Vagina (tissue), 2 donors: ENCODE measurements at regions of chr18 and their contacts with region 1.

Region 1: DNA sequence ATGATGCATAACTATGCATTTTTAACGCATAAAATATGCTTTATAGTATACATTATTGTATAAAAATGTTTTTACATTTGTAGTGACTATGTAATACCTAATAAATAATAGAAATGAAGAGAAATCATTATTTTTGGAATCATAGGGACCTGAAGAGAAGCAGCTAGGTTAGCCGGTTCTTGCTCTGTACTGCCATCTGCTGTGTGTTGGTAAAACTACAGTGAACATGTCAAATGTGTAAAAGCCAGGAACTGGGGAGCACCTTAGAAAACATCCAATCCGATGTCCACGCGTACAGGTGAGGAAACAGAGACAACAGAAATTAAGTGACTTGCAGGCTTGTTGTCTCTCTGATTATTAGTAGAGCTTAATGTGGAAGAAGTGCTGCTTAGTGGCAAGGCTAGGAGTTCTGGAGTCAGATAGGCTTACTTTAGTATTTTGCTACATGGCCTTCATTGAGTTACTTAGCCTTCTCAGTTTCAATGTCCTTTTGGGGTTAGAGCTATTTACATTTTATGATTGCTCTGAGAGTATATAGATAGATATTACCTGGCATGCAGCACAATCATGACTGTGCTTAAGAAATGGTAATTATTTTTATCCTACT is 386.5 kb downstream of the DLGAP1 start:
- DNase-seq: no peak
- H3K4me3 ChIP-seq: no peak overlapping the region
- H3K27ac ChIP-seq: no peak overlapping the region
- H3K4me1 ChIP-seq: no peaks in the 10 kb centered on the region
- H3K27me3 ChIP-seq: no peaks in the 10 kb centered on the region
- CTCF ChIP-seq: peak in 2 of 3 experiments; percentile 24 to 45
- POLR2A ChIP-seq: no peak

Region 2: DNA sequence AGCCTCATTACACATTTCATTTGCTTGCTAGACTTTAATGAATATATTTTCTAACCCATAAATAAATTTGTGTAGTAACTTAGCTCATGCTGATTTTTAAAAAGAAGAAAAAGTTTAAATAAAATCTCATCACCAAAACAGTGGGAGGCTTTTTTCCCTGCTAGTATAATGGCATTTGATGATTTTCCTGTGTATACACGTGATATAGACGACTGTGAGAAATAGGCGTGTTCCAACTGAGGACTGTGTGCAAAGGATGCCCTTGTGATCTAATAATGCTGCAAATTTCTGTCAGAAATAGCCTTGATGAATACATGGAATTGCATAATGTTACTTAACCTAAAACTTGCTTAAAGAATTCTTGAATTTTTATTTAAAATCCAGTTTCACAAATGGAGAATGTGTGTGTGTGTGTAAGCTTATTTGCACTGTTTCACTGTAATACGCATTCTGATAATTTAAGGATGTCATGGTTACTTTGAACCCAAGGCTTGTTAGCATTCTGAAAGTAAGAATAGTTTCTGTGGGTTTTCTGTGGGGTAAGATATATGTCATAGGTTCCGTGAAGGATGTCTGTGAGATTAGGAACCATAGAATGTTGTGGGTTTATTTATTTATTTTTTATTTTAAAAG is 208.4 kb after region 1 on chr18:
- intact Hi-C with region 1: loop called (anchors 10 kb)
- DNase-seq: no peak
- H3K4me3 ChIP-seq: no peak overlapping the region
- H3K27ac ChIP-seq: no peak overlapping the region
- H3K4me1 ChIP-seq: no peaks in the 10 kb centered on the region
- H3K27me3 ChIP-seq: no peaks in the 10 kb centered on the region
- CTCF ChIP-seq: no peak
- POLR2A ChIP-seq: no peak